ENCODE measurements at regions of chr1 and their contacts with region 1.

Region 1: DNA sequence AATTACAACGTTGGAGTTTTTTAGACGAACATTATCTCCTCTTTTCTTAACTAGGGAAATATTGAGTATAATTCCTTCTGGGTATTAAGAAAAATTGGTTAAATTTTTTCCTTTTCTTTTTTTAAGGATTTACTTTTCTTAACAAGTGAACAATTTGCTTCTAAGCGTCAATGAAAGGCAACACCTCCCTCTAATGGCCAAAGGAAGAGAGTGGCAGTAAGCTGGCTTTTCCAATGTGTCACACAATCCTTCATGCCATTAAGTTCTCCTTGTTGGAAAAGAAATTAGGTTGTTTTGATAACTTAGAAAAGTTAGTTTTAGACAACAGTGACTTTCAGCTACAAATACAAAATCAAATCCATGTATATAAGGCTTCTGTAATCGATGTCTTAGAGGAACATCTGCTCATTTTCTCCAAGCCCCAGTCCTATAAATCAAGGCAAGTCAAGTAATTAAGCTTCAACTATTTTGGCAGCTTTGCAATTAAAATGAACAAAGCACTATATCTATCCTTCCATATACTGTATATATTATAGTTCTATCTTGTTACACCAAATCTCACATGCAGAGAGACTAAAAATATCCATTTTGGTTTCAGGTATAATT is 62.8 kb downstream of the EDEM3 start:
- DNase-seq: no peak
- H3K4me3 ChIP-seq: no peak overlapping the region
- CTCF ChIP-seq: peak; percentile 72

Region 2: DNA sequence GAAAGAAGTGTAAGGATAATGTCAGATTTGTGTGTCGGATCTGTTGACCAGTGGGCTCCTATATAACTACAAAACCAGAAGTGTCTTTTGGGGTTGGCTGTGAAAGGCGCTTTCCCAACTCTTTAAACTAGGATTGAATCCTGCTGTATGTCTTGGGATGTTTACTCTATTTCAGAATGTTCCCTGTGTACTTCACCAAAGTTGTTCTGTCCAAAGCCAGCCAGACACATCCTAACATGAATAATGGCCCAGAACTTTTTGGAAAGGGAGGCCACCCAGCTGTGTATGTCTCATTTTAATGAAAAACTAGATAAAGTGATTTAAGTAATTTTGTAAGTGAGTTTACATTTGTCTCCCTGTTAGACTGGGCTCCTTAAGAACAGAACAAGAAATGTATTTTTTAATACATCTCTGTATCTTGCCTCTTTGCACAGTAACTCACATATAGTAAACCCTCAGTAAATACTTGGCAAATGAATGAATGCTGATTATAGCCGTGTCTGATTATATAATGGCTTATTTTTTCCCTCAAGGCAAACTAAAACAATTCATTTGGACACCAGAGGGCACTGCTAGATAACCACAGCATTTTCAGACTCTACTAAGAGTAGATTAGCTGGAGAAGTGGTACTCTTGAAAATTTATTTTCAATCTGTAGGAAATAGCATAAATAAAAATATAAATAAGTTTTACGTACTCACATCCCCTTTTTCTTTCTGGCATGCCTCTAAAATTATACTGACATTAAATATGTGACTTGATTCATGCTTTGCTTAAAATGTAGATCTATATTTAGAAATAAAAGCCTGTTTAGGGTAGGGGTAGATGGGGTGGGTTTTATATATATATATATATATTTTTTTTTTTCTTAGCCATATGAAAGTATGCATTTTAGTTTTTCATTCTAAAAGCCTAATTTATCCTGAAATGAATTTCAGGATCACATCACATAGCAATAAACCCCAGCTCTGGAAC is 616.5 kb before region 1 on chr1:
- CTCF ChIA-PET with region 1: interaction called, 24 read pairs
- POLR2A ChIA-PET with region 1: no interaction called
- DNase-seq: no peak
- H3K4me3 ChIP-seq: no peak overlapping the region
- CTCF ChIP-seq: peak; percentile 45

Region 3: GRCh38 chr1:184656221-184656620 is 35.6 kb before region 1 on chr1:
- CTCF ChIA-PET with region 1: no interaction called
- POLR2A ChIA-PET with region 1: no interaction called
- DNase-seq: no peak
- H3K4me3 ChIP-seq: no peak overlapping the region
- CTCF ChIP-seq: no peak

Region 4: DNA sequence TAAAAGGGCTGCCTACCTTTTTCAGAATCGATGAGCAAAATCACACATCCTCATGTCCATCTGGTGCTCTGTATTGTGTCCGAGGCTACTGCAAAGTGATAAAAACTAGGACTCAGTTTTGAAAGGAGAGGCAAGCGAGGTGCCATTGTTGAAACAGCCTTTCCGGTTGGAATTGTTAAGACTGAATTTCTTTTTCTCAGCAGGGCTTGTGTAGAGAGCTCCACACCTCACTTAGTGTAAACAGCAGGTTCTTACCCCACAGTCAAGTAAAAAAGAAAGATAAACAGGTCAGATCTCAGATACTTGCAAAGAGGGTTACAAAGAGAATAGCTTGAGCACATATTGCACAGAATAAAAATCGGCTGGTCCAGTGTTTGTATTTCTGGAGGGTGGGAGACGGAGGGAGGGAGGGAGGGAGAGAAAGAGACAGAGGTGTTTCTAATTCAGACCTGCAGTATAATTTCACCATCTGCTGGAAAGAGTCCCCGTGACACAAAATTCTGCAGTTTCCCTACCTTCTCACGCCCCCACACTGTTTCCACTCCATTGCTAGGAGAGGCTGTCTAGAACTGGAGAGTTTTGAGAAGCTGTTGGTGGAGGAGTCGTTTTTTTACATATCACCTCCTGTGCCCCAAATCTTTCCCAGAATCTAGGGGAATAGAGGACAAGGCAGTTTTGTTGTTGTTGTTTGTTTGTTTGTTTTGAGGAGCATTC is 19.7 kb before region 1 on chr1:
- CTCF ChIA-PET with region 1: interaction called, 12 read pairs
- POLR2A ChIA-PET with region 1: no interaction called
- DNase-seq: no peak
- H3K4me3 ChIP-seq: no peak overlapping the region
- CTCF ChIP-seq: no peak